IMR-90 (cell line): ENCODE measurements at regions of chr1 and their contacts with region 1.

Region 1: DNA sequence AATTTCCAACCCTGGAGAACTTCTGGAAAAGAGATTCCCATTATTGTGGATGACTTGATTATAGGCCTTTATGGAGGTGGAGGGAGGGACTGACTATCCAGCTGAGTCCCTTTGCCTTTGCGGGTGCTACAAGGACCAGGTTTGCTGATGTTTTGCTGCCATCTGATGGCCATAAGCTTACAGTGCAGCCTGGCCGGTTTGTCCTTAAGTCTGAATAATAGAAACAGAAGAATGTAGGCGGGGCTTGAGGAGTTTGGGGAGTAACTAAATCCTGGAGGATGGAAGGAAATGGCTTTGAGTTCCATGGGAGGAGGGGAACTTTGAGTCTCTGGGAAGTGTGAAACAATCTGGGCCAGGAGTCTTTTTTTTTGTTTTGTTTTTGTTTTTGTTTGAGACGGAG is 55.7 kb upstream of the CD1D start:
- DNase-seq: peak; percentile 92
- ATAC-seq: peak; percentile 99
- H3K4me3 ChIP-seq: no peak overlapping the region
- H3K27ac ChIP-seq: no peak overlapping the region
- H3K4me1 ChIP-seq: no peaks in the 10 kb centered on the region
- H3K27me3 ChIP-seq: peaks cover 25% of the 10 kb centered on the region
- CTCF ChIP-seq: peak; percentile 99
- POLR2A ChIP-seq: 0 out of 2 replicates have a peak, but pooled peaks have one; percentile 39
- RAD21 ChIP-seq: peak; percentile 100

Region 2: GRCh38 chr1:157369808-157370521 is 755.0 kb before region 1 on chr1:
- CTCF ChIA-PET with region 1: no interaction called
- POLR2A ChIA-PET with region 1: no interaction called
- dilution Hi-C with region 1: no loop called
- in situ Hi-C with region 1: loop called (anchors 25 kb)
- intact Hi-C with region 1: loop called (anchors 5 kb)
- DNase-seq: peak; percentile 43
- ATAC-seq: peak; percentile 98
- H3K4me3 ChIP-seq: no peak overlapping the region
- H3K27ac ChIP-seq: no peak overlapping the region
- H3K4me1 ChIP-seq: no peaks in the 10 kb centered on the region
- H3K27me3 ChIP-seq: peaks cover 1% of the 10 kb centered on the region; the same call in 1 of the 2 replicates
- CTCF ChIP-seq: peak; percentile 67
- POLR2A ChIP-seq: no peak
- RAD21 ChIP-seq: peak; percentile 66

Region 3: DNA sequence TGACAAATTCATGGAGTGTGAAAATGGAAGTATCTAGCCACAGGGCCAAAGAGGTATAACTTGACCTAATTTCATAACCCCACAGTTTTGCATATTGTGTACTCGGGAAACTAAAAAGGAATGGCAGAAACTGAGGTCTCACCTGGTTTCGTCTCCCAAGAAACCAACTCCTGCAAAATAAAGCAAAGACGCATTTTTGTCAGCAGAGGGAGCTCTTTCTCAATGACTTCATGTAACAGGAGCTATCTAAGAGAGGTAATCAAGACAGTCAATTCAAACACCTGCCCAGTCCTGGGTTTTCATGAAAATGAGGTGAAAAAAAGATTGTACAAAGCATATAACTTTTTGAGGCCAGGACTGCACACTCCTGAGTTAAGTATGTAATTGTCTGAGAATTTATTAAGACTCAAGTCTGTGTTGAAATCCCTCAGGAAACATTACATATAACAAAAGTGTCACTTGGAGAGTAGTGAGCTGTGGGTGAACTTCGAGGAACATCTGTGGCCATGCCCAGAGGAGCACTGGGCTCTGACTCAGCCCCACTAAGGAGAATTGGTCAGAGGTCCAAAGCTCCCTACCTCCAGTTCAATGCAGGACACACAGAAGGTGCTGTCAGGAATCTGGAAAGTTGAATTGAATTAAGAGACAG is 544.7 kb before region 1 on chr1:
- CTCF ChIA-PET with region 1: interaction called, 8 read pairs
- POLR2A ChIA-PET with region 1: no interaction called
- dilution Hi-C with region 1: no loop called
- in situ Hi-C with region 1: loop called (anchors 10 kb)
- intact Hi-C with region 1: loop called (anchors 2 kb)
- DNase-seq: peak; percentile 57
- ATAC-seq: peak; percentile 71
- H3K4me3 ChIP-seq: no peak overlapping the region
- H3K27ac ChIP-seq: no peak overlapping the region
- H3K4me1 ChIP-seq: no peaks in the 10 kb centered on the region
- H3K27me3 ChIP-seq: no peaks in the 10 kb centered on the region
- CTCF ChIP-seq: peak; percentile 60
- POLR2A ChIP-seq: no peak
- RAD21 ChIP-seq: peak; percentile 36

Region 4: DNA sequence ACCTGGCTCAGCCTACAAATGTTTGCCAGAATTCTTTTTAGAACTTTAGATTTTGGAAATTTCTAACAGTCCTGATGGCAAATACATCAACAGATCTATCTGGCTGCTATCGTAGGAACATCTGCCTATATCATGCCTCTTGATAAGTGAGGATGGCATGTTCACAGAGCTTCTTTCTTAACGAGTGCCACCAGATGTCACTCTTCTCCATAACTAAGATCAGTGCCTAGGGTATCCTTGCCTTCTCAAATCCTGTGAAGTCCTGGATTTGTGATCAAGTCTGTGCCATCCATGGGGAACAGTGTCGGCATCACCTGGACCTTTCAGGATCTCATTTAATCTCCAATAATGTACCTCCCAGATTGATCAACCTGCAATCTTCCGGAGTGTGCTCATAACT is 246.9 kb before region 1 on chr1:
- CTCF ChIA-PET with region 1: no interaction called
- POLR2A ChIA-PET with region 1: no interaction called
- dilution Hi-C with region 1: no loop called
- in situ Hi-C with region 1: no loop called
- intact Hi-C with region 1: loop called (anchors 2 kb)
- DNase-seq: peak; percentile 35
- ATAC-seq: peak; percentile 59
- H3K4me3 ChIP-seq: no peak overlapping the region
- H3K27ac ChIP-seq: no peak overlapping the region
- H3K4me1 ChIP-seq: no peaks in the 10 kb centered on the region
- H3K27me3 ChIP-seq: no peaks in the 10 kb centered on the region
- CTCF ChIP-seq: peak; percentile 37
- POLR2A ChIP-seq: no peak
- RAD21 ChIP-seq: peak; percentile 32; the same call in 1 of the 2 replicates

Region 5: DNA sequence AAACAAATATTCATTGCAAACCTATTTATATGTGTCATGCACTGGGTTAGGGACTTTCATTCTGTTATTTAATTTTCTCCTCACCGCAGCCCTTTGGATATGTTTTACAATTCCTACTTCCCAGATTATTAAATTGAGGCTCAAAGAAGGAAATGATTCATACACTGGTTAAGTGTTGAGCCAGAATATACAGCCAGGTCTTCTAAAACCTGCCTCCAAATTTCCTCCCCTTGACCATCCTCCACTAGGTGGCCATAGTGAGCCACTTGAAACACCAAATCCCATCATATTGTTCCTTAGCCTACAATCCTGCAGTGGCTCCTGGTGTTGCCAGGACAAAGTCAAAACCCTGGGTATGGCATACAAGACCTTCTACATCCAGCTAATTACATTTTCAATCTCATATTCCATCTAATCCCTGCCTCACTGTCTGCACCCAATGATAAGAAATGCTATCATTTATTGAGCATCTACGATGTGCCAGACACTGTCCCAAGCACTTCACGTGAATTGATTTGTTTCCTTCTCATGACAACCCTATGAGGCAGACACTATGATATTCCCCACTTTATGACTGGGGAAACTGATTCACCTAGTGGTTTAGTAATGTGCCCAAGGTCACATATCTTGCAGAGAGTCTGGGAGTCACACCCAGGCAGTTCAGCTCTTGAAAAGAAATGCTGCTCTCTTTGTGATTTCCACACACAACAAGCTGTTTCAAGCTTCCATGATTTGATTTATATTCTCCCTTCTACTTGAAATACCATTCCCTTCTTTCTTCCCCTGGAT is 155.1 kb before region 1 on chr1:
- CTCF ChIA-PET with region 1: interaction called, 47 read pairs
- POLR2A ChIA-PET with region 1: no interaction called
- dilution Hi-C with region 1: loop called (anchors 25 kb)
- in situ Hi-C with region 1: no loop called
- intact Hi-C with region 1: loop called (anchors 1 kb)
- DNase-seq: peak; percentile 88
- ATAC-seq: peak; percentile 75
- H3K4me3 ChIP-seq: no peak overlapping the region
- H3K27ac ChIP-seq: no peak overlapping the region
- H3K4me1 ChIP-seq: peaks cover 15% of the 10 kb centered on the region
- H3K27me3 ChIP-seq: peaks cover 6% of the 10 kb centered on the region
- CTCF ChIP-seq: peak; percentile 93
- POLR2A ChIP-seq: no peak
- RAD21 ChIP-seq: peak; percentile 84

Region 6: DNA sequence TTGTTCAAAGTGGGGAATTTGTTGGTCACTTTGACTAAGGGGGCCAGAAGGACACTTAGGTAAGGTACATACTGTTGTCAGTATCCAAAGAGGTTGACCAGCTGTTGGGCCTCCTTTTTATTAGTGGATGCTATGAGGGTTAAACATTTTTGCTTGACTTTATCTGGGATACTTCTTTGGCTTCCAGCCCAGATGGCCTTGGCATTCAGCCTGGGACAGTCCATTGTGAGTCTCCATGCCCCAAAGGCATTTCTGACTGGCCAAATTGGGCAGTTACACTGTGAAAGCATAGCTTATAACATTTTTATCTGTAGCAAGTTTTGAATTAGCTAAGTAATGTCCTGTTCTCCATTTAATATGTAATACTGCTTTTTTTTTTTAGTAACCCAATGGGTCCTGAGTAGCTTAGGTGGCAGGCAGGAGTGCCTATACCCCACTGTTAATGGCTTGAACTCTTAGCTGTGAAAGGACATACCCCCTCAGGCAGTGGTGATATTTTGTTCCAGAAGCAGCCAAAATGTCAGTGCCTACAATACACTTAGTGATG is 20.2 kb after region 1 on chr1:
- CTCF ChIA-PET with region 1: interaction called, 11 read pairs
- POLR2A ChIA-PET with region 1: no interaction called
- dilution Hi-C with region 1: no loop called
- in situ Hi-C with region 1: no loop called
- intact Hi-C with region 1: no loop called
- DNase-seq: peak; percentile 57
- ATAC-seq: no peak
- H3K4me3 ChIP-seq: no peak overlapping the region
- H3K27ac ChIP-seq: no peak overlapping the region
- H3K4me1 ChIP-seq: peaks cover 3% of the 10 kb centered on the region
- H3K27me3 ChIP-seq: no peaks in the 10 kb centered on the region
- CTCF ChIP-seq: no peak
- POLR2A ChIP-seq: no peak
- RAD21 ChIP-seq: no peak

Region 7: DNA sequence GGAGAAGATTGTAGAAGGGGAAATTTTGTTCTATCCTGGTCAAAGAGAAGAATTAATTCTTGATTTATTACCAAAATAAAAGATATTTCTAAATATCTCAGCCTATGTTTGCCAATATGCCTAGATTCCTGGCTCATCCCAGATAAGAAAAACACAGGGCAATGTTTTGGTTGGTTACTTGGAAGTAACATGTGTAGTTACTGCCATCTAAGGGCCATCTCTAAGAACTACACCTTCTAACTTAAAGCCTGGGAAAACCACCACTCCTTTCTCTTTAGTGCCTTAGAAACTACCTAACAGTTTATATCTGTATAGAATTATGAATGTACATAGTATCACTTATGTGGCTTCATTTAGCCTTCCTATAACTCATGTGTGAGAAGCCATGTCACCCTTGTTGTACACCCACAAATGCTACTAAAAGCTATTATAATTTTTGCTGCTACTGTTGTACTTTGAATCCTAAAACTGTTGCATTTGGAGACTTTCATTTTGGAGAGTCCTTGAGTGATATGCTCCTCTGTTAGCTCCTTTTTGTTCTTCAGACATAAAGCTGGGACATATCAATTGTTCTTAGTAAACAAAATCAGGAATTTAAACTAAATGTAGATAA is 947.1 kb after region 1 on chr1:
- CTCF ChIA-PET with region 1: no interaction called
- POLR2A ChIA-PET with region 1: no interaction called
- dilution Hi-C with region 1: no loop called
- in situ Hi-C with region 1: no loop called
- intact Hi-C with region 1: loop called (anchors 2 kb)
- DNase-seq: peak; percentile 80
- ATAC-seq: peak; percentile 99
- H3K4me3 ChIP-seq: no peak overlapping the region
- H3K27ac ChIP-seq: no peak overlapping the region
- H3K4me1 ChIP-seq: no peaks in the 10 kb centered on the region
- H3K27me3 ChIP-seq: no peaks in the 10 kb centered on the region
- CTCF ChIP-seq: peak; percentile 78
- POLR2A ChIP-seq: no peak
- RAD21 ChIP-seq: peak; percentile 83